ENCODE measurements at regions of chr7 and their contacts with region 1.

Region 1: DNA sequence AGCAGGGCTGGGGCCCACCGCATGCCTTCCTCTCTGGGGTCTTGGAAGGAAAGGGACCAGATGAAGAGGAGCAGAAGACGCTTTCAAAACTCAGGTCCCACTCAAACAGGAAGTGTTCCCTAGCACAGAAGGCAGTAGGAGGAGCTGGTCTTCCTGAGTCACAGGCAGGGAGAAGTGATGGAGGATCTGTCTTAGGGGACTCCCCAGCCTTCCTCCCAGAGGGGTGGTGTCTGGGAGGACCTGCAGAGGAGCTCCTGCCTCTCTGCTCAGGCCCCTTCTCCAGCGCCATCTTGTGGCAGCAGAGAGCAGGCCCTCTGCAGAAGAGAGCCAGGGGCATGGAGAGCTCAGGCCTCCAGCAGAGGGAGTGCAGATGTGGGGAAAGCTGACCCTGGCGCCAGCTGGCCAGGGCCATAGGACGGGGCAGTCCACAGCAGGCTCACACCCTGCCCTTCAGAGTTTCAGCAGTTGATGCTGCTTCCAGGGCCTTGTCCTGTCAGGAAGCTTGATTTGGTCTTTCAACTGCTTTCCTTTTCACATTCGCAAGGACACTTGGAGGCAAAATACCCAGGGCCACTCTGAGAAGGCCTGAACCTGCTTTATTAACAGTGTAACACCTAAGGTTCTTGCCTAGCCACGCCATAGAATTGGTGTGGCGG is 62.2 kb upstream of the TARP start:
- DNase-seq: peak; percentile 90
- H3K4me3 Mint-ChIP-seq: peak overlapping the region; percentile 43
- H3K27ac Mint-ChIP-seq: peak overlapping the region; percentile 77
- H3K4me1 Mint-ChIP-seq: peaks cover 39% of the 10 kb centered on the region
- H3K27me3 Mint-ChIP-seq: no peaks in the 10 kb centered on the region

Region 2: DNA sequence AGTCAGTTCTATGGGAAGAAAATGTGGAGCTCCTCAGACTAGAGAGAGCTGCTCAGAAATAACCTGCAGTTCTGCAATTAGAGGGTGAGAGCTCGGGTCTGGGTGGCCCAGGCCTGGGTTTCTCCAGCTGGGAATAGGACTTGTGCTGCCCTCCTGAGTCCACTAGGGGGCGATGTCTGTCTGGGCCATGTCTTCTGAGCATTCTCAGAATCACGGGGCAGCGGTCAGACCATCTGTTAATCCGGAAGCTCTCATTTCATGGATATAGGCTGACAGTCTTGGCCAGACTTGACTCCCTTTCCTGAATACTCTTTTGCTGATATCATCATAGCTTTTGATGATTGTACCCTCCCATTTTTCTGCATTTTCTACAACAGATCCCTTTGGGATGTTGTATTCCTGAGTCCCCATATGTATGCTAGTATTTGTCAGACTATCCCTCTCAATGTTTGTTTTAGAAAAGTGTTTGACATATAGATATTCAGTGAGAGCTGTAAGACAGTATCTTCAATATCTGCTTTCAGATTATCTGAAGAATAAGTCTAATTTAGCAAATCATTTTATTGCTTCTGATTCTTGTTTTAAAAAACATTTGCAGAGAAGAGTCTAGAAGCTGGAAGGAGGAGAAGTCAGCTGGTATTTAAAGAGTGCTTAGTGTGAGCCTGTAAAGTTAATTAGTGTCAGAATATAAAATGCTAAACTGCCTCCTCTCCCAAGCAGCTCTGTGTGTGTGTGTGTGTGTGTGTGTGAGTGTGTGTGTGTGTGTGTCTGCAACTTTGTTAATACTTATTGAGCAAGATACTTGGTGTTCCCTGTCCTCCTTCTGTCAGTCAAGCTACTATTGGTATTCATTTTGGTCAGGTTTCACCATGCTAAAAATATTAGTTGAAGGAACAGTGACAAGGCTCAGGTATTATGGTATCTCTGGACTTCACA is 119.6 kb before region 1 on chr7:
- CTCF ChIA-PET with region 1: interaction called, 80 read pairs
- intact Hi-C with region 1: loop called (anchors 1 kb)
- DNase-seq: peak; percentile 86
- H3K4me3 Mint-ChIP-seq: no peak overlapping the region
- H3K27ac Mint-ChIP-seq: no peak overlapping the region
- H3K4me1 Mint-ChIP-seq: peaks cover 4% of the 10 kb centered on the region
- H3K27me3 Mint-ChIP-seq: no peaks in the 10 kb centered on the region

Region 3: GRCh38 chr7:38232502-38233366 is 102.9 kb before region 1 on chr7:
- CTCF ChIA-PET with region 1: interaction called, 12 read pairs
- intact Hi-C with region 1: no loop called
- DNase-seq: peak; percentile 82
- H3K4me3 Mint-ChIP-seq: peak overlapping the region; percentile 9
- H3K27ac Mint-ChIP-seq: peak overlapping the region; percentile 2
- H3K4me1 Mint-ChIP-seq: peaks cover 21% of the 10 kb centered on the region
- H3K27me3 Mint-ChIP-seq: no peaks in the 10 kb centered on the region

Region 4: DNA sequence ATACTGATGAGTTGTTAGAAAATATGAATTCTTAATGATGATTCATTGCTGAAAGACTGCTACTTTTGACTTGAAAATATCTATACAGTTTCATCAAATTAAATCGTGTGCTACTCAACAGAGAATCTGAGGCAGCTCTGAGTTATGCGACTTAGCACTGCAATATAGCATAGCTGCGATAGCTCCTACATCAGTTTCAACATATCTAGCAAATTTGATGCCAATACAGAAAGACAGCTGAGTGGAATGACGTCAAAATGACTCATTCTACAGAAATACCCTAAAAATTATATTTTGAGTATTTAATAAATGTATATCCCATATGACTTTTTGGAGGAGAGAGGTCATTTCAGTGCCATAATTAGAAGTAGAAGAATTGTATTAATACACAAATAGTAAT is 61.1 kb before region 1 on chr7:
- CTCF ChIA-PET with region 1: no interaction called
- intact Hi-C with region 1: no loop called
- DNase-seq: no peak
- H3K4me3 Mint-ChIP-seq: no peak overlapping the region
- H3K27ac Mint-ChIP-seq: no peak overlapping the region
- H3K4me1 Mint-ChIP-seq: no peaks in the 10 kb centered on the region
- H3K27me3 Mint-ChIP-seq: no peaks in the 10 kb centered on the region

Region 5: DNA sequence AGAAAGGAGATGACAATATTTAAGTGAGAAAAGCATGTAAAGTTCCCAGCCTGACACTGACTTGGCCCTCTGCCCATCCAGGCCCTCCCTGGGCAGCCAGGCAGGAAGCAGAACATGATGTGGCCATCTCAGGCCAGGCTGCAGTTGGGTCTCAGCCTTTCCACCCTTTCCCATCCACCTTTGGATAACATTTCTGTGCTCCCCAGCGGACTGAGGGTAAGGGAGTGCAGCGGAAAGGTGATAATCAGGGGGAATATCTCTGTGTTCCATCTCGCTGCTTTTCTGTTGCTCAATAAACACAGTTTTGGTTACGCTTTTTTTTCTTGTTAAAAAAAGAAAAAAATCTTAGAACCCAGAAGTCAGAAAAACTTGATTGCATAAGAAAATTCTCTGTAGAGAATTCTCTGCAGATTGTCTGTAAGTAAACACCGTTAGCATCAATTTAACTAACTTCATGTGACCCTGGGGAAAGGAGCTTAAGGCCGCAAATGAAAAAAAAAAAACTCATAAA is 25.0 kb before region 1 on chr7:
- CTCF ChIA-PET with region 1: interaction called, 11 read pairs
- intact Hi-C with region 1: no loop called
- DNase-seq: no peak
- H3K4me3 Mint-ChIP-seq: peak overlapping the region; percentile 60
- H3K27ac Mint-ChIP-seq: no peak overlapping the region
- H3K4me1 Mint-ChIP-seq: peaks cover 13% of the 10 kb centered on the region
- H3K27me3 Mint-ChIP-seq: no peaks in the 10 kb centered on the region

Region 6: GRCh38 chr7:38360776-38361175 is 25.2 kb after region 1 on chr7:
- CTCF ChIA-PET with region 1: interaction called, 15 read pairs
- intact Hi-C with region 1: no loop called
- DNase-seq: no peak
- H3K4me3 Mint-ChIP-seq: peak overlapping the region; percentile 91
- H3K27ac Mint-ChIP-seq: peak overlapping the region; percentile 94
- H3K4me1 Mint-ChIP-seq: peaks cover 39% of the 10 kb centered on the region
- H3K27me3 Mint-ChIP-seq: no peaks in the 10 kb centered on the region

Measured in activated naive CD4-positive, alpha-beta T cell treated with anti-CD3 and anti-CD28 coated beads for 36 hours (primary cell).